Calu3 (cell line): ENCODE measurements at regions of chr17 and their contacts with region 1.

Region 1: DNA sequence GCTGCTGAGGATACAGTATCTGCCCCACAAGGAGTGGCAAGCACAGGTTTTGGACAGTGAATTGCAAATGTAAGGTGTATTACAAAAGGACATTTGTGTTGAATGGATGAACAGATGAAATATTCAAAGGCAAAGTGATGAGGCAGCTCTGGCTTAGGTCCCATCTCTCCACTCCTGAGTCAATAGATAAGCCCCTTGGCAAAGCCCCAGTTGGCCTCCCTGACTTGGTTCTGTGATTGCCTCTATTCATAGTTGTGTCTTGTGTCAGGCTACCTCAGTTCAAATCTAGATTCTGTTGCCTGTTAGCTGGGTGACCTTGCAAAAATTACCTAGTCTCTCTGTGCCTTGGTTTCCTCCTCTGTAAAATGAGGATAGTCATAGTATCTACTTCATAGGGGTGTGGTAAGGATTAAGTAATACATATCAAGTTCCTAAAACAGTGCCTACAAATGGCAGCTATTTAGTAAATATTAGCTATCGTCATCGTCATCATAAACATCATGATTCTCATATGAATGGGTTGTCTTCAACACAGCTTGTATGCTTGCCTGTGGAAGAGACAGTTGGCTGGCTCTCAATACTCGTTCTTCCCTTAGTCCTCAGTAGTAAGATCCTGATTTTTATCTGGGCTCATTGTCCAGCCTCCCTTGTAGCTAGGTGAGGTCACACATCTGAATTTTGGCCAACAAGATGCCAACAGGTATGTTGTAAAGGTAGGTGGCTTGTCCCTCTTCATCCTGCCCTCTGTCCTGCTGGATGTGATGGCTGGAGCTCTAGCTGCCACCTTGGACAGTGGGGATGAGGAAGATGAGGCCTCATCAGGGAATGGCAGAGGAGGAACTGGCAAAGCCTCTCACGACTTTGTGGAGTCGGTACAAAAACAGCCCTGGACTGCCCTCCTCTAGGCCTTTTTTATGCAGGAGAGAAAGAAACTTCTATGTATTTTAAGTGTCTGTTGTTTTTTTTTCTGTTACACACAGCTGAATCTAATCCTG is 2.1 kb upstream of the MFAP4 start:
- DNase-seq: no peak
- H3K4me3 Mint-ChIP-seq: no peak overlapping the region
- H3K27ac Mint-ChIP-seq: no peak overlapping the region
- H3K4me1 Mint-ChIP-seq: no peaks in the 10 kb centered on the region
- H3K27me3 Mint-ChIP-seq: no peaks in the 10 kb centered on the region
- CTCF ChIP-seq: no peak

Region 2: DNA sequence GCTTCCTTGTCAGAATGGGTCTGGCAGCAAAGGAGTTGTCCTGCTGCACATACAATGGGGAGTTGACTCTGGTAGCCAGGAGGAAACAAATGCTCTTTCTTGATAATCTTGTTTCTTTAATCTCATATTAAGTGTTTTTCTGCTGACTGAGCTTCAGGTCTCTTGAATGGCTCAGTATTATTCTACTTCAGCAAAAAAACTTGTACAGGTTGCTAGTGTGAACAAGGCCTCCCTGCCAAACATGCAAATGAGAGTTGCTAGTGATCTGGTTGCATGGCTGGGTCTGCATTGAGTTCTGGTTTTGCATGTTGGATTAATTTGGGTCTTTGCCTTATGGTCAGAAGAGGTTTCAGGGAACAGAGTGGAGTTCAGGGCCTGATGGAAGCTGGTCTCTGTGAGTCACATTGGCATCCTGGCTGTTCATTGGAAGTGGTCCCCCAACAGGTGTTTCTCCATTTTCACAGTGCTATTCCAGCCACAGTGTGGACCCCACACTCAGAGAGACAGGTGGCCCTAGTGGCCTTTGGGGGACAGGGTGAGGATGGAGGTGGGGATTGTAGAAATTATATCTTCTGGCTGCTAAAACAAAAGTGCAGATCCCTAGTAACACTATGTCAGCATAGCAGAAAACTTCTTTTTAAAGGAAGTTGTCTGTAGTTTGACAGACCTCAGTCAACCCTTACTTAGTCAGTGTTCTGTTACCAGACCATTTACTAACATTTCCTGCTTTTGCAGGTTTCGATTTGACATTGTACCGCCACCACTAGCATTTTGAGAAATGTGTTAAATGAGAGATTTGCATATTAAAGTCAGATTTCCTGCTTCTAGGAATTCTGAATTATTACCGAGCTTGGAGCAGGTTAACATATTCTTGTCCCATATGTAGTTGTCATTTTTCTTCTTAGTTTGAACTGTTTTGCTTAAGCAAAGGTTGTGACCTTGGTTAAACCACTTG is 104.8 kb before region 1 on chr17:
- CTCF ChIA-PET with region 1: no interaction called
- intact Hi-C with region 1: no loop called
- DNase-seq: no peak
- H3K4me3 Mint-ChIP-seq: no peak overlapping the region
- H3K27ac Mint-ChIP-seq: no peak overlapping the region
- H3K4me1 Mint-ChIP-seq: no peaks in the 10 kb centered on the region
- H3K27me3 Mint-ChIP-seq: no peaks in the 10 kb centered on the region
- CTCF ChIP-seq: no peak

Region 3: GRCh38 chr17:19415311-19415710 is 26.2 kb after region 1 on chr17:
- CTCF ChIA-PET with region 1: interaction called, 10 read pairs
- intact Hi-C with region 1: no loop called
- DNase-seq: no peak
- H3K4me3 Mint-ChIP-seq: no peak overlapping the region
- H3K27ac Mint-ChIP-seq: no peak overlapping the region
- H3K4me1 Mint-ChIP-seq: no peaks in the 10 kb centered on the region
- H3K27me3 Mint-ChIP-seq: peaks cover 14% of the 10 kb centered on the region
- CTCF ChIP-seq: no peak